Breast epithelium (tissue), 4 donors: ENCODE measurements at regions of chr18 and their contacts with region 1.

Region 1: DNA sequence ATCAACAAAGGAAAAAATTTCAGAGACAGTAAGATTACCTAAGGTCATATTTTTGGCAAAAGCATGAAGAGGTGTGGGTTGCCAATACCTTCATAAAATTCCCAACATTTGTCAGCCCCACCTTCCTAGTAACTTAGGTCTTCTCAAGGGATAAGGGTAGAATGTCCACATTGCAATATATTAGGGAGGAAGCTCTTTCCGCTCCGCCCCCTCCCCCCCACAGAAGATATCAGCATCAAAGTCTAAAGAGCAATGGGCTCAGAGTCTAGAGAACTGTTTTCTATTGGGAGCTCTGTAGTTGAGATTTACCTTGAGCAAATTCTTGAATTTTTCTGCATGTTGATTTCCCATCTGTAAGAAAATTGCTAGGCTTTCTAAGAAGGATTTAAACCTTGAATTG is 200.3 kb downstream of the CD226 start:
- DNase-seq: no peak
- H3K4me3 ChIP-seq: no peak overlapping the region
- H3K27ac ChIP-seq: no peak overlapping the region
- H3K4me1 ChIP-seq: no peaks in the 10 kb centered on the region
- H3K27me3 ChIP-seq: no peaks in the 10 kb centered on the region
- CTCF ChIP-seq: no peak
- POLR2A ChIP-seq: no peak

Region 2: DNA sequence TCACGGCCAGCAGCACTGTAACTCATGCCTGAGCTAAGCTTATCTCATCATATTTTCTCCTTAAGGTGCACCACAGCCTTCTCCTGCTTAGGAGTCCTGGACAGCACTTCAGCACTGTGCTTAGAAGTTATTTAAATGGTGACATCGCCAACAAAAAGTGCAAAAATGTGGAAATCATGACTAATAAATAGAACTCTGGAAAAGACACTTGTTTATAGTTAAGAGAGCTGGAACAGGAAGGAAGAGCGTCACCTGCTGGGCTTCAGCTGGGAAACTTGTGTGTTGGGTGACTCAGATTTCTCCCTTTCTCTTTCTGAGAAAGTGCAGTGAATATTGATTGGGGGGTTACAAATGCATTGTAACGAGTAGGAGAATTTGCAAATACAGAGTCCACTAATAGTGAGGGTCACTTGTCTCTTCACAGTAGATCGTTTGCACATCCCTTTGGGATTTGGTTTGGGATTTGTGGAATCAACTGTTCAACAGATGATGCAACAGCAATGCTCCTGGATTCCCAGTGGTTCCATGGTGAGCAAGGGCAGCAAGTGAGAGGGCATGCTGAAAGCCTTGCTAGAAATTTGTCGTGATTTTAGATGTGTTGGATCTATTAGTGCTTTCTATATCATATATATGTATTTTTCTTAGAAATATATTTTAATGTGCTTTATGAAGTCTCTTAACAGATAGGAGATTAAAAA is 262.5 kb before region 1 on chr18:
- intact Hi-C with region 1: loop called (anchors 5 kb)
- DNase-seq: no peak
- H3K4me3 ChIP-seq: no peak overlapping the region
- H3K27ac ChIP-seq: no peak overlapping the region
- H3K4me1 ChIP-seq: no peaks in the 10 kb centered on the region
- H3K27me3 ChIP-seq: no peaks in the 10 kb centered on the region
- CTCF ChIP-seq: no peak
- POLR2A ChIP-seq: no peak

Region 3: DNA sequence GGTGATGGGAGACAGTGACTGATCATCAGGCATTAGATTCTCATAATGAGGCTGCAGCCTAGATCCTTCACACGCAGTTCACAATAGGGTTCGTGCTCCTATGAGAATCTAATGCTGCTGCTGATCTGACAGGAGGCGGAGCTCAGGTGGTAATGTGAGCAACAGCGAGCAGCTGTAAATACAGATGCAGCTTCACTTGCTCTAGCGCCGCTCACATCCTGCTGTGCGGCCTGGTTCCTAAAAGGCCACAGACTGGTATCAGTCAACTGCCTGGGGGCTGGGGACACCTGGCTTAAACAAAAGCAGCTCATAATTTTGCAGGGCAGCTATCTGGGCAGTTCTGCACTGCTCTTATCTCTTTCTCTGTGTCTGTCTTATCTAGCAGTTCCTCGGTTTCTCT is 220.7 kb after region 1 on chr18:
- intact Hi-C with region 1: no loop called
- DNase-seq: no peak
- H3K4me3 ChIP-seq: no peak overlapping the region
- H3K27ac ChIP-seq: no peak overlapping the region
- H3K4me1 ChIP-seq: no peaks in the 10 kb centered on the region
- H3K27me3 ChIP-seq: no peaks in the 10 kb centered on the region
- CTCF ChIP-seq: no peak
- POLR2A ChIP-seq: no peak